B cell (primary cell): ENCODE measurements at regions of chr14 and their contacts with region 1.

Region 1: GRCh38 chr14:93206793-93207467 is at the starts of genes GON7 and UBR7:
- DNase-seq: peak; percentile 92
- ATAC-seq: peak; percentile 96
- H3K4me3 ChIP-seq: peak within 1 kb of the TSS; percentile 2 to 97 (median 94)
- H3K4me3 Mint-ChIP-seq: peak within 1 kb of the TSS; percentile 97
- H3K27ac ChIP-seq: peak within 1 kb of the TSS; percentile 64 to 84
- H3K27ac Mint-ChIP-seq: peak within 1 kb of the TSS; percentile 91
- H3K4me1 ChIP-seq: peaks cover 28 to 42% of the 10 kb centered on the region in 2 donors
- H3K4me1 Mint-ChIP-seq: peaks cover 54% of the 10 kb centered on the region
- H3K27me3 ChIP-seq: no peaks in the 10 kb centered on the region
- H3K27me3 Mint-ChIP-seq: no peaks in the 10 kb centered on the region
- CTCF ChIP-seq: peak; percentile 21
- total RNA-seq, gene GON7: 8.9 and 9.9 TPM in 2 replicates
- total RNA-seq, gene UBR7: 17.3 and 19.1 TPM in 2 replicates

Region 2: DNA sequence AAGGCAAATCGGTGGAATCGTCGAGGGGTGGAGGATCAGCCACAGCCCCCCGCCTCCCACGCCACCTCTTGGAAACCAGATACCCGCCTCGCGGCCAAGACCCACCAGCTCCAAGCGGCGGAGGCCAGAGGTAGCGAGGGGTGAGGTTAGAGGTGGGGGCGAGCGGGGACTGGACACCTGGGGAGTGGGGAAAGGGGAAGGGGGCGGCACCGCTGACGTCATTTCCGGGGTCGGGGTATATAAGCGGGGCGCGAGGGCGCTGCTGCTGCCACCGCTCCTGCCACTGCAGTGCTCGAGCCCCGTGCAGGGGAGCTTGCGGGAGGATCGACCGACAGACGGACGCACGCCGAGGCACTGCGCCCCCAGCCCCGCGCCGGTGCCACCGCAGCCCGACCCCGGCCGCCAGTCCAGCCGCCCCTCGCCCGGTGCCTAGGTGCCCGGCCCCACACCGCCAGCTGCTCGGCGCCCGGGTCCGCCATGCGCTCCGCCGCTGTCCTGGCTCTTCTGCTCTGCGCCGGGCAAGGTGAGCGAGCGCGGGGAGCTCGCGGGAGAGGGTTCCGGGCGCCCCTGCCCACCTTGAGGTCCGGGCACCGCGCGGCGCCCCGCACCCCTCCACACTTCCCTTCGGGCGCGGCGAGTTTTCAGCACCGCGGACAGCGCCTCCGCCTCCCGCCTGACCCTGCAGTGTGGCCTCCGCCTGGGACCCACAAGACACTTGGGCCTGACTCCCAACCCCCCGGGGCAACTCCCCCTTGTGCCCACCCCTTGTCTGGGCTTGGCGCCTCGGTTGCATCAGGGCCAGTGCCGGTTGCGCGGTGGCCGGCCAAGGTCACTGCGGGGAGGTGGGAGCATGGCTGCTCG is 283.8 kb before region 1 on chr14 and contains the start of gene CHGA:
- CTCF ChIA-PET with region 1: no interaction called
- POLR2A ChIA-PET with region 1: no interaction called
- intact Hi-C with region 1: no loop called
- DNase-seq: peak; percentile 54
- ATAC-seq: peak; percentile 31
- H3K4me3 ChIP-seq: no peak within 1 kb of the TSS
- H3K4me3 Mint-ChIP-seq: no peak within 1 kb of the TSS
- H3K27ac ChIP-seq: no peak within 1 kb of the TSS
- H3K27ac Mint-ChIP-seq: no peak within 1 kb of the TSS
- H3K4me1 ChIP-seq: peaks cover 6 to 8% of the 10 kb centered on the region in 2 donors
- H3K4me1 Mint-ChIP-seq: peaks cover 15% of the 10 kb centered on the region
- H3K27me3 ChIP-seq: peaks cover 0 to 21% (median 3%) of the 10 kb centered on the region in 4 experiments
- H3K27me3 Mint-ChIP-seq: peaks cover 46% of the 10 kb centered on the region
- CTCF ChIP-seq: no peak
- total RNA-seq, gene CHGA: not detected in 2 replicates

Region 3: GRCh38 chr14:93137864-93138263 is 69.1 kb before region 1 on chr14:
- CTCF ChIA-PET with region 1: no interaction called
- POLR2A ChIA-PET with region 1: no interaction called
- intact Hi-C with region 1: loop called (anchors 2 kb)
- DNase-seq: no peak
- ATAC-seq: no peak
- H3K4me3 ChIP-seq: no peak overlapping the region
- H3K4me3 Mint-ChIP-seq: no peak overlapping the region
- H3K27ac ChIP-seq: no peak overlapping the region
- H3K27ac Mint-ChIP-seq: no peak overlapping the region
- H3K4me1 ChIP-seq: no peaks in the 10 kb centered on the region
- H3K4me1 Mint-ChIP-seq: peaks cover 2% of the 10 kb centered on the region
- H3K27me3 ChIP-seq: no peaks in the 10 kb centered on the region
- H3K27me3 Mint-ChIP-seq: no peaks in the 10 kb centered on the region
- CTCF ChIP-seq: no peak

Region 4: GRCh38 chr14:93228550-93228949 is 21.6 kb after region 1 on chr14:
- CTCF ChIA-PET with region 1: no interaction called
- POLR2A ChIA-PET with region 1: no interaction called
- intact Hi-C with region 1: no loop called
- DNase-seq: no peak
- ATAC-seq: no peak
- H3K4me3 ChIP-seq: no peak overlapping the region
- H3K4me3 Mint-ChIP-seq: no peak overlapping the region
- H3K27ac ChIP-seq: no peak overlapping the region
- H3K27ac Mint-ChIP-seq: no peak overlapping the region
- H3K4me1 ChIP-seq: peaks cover 4% of the 10 kb centered on the region in 2 donors
- H3K4me1 Mint-ChIP-seq: peaks cover 12% of the 10 kb centered on the region
- H3K27me3 ChIP-seq: peaks cover 0 to 11% (median 0%) of the 10 kb centered on the region in 4 experiments
- H3K27me3 Mint-ChIP-seq: peaks cover 8% of the 10 kb centered on the region
- CTCF ChIP-seq: no peak

Region 5: GRCh38 chr14:93239869-93240677 is 33.1 kb after region 1 on chr14:
- CTCF ChIA-PET with region 1: no interaction called
- POLR2A ChIA-PET with region 1: no interaction called
- intact Hi-C with region 1: no loop called
- DNase-seq: no peak
- ATAC-seq: no peak
- H3K4me3 ChIP-seq: no peak overlapping the region
- H3K4me3 Mint-ChIP-seq: no peak overlapping the region
- H3K27ac ChIP-seq: no peak overlapping the region
- H3K27ac Mint-ChIP-seq: no peak overlapping the region
- H3K4me1 ChIP-seq: no peaks in the 10 kb centered on the region
- H3K4me1 Mint-ChIP-seq: no peaks in the 10 kb centered on the region
- H3K27me3 ChIP-seq: no peaks in the 10 kb centered on the region
- H3K27me3 Mint-ChIP-seq: no peaks in the 10 kb centered on the region
- CTCF ChIP-seq: no peak

Region 6: GRCh38 chr14:93332853-93333630 is 126.1 kb after region 1 on chr14 and contains the start of gene BTBD7:
- CTCF ChIA-PET with region 1: no interaction called
- POLR2A ChIA-PET with region 1: no interaction called
- intact Hi-C with region 1: loop called (anchors 1 kb)
- DNase-seq: peak; percentile 96
- ATAC-seq: peak; percentile 90
- H3K4me3 ChIP-seq: peak within 1 kb of the TSS; percentile 66 to 95 (median 82)
- H3K4me3 Mint-ChIP-seq: peak within 1 kb of the TSS; percentile 92
- H3K27ac ChIP-seq: peak within 1 kb of the TSS; percentile 59 to 92
- H3K27ac Mint-ChIP-seq: peak within 1 kb of the TSS; percentile 95
- H3K4me1 ChIP-seq: peaks cover 19 to 31% of the 10 kb centered on the region in 2 donors
- H3K4me1 Mint-ChIP-seq: peaks cover 49% of the 10 kb centered on the region
- H3K27me3 ChIP-seq: no peaks in the 10 kb centered on the region
- H3K27me3 Mint-ChIP-seq: no peaks in the 10 kb centered on the region
- CTCF ChIP-seq: no peak
- total RNA-seq, gene BTBD7: 48.6 and 49.0 TPM in 2 replicates

Region 7: GRCh38 chr14:93619176-93619793 is 412.4 kb after region 1 on chr14:
- CTCF ChIA-PET with region 1: interaction called, 7 read pairs
- POLR2A ChIA-PET with region 1: no interaction called
- intact Hi-C with region 1: loop called (anchors 1 kb)
- DNase-seq: peak; percentile 49
- ATAC-seq: no peak
- H3K4me3 ChIP-seq: no peak overlapping the region
- H3K4me3 Mint-ChIP-seq: no peak overlapping the region
- H3K27ac ChIP-seq: no peak overlapping the region
- H3K27ac Mint-ChIP-seq: no peak overlapping the region
- H3K4me1 ChIP-seq: no peaks in the 10 kb centered on the region
- H3K4me1 Mint-ChIP-seq: no peaks in the 10 kb centered on the region
- H3K27me3 ChIP-seq: peaks cover 0 to 3% (median 0%) of the 10 kb centered on the region in 4 experiments
- H3K27me3 Mint-ChIP-seq: peaks cover 19% of the 10 kb centered on the region
- CTCF ChIP-seq: peak; percentile 73

Region 8: GRCh38 chr14:93752635-93753561 is 546.0 kb after region 1 on chr14:
- CTCF ChIA-PET with region 1: no interaction called
- POLR2A ChIA-PET with region 1: no interaction called
- intact Hi-C with region 1: no loop called
- DNase-seq: no peak
- ATAC-seq: no peak
- H3K4me3 ChIP-seq: no peak overlapping the region
- H3K4me3 Mint-ChIP-seq: no peak overlapping the region
- H3K27ac ChIP-seq: no peak overlapping the region
- H3K27ac Mint-ChIP-seq: no peak overlapping the region
- H3K4me1 ChIP-seq: no peaks in the 10 kb centered on the region
- H3K4me1 Mint-ChIP-seq: no peaks in the 10 kb centered on the region
- H3K27me3 ChIP-seq: no peaks in the 10 kb centered on the region
- H3K27me3 Mint-ChIP-seq: no peaks in the 10 kb centered on the region
- CTCF ChIP-seq: no peak

Region 9: DNA sequence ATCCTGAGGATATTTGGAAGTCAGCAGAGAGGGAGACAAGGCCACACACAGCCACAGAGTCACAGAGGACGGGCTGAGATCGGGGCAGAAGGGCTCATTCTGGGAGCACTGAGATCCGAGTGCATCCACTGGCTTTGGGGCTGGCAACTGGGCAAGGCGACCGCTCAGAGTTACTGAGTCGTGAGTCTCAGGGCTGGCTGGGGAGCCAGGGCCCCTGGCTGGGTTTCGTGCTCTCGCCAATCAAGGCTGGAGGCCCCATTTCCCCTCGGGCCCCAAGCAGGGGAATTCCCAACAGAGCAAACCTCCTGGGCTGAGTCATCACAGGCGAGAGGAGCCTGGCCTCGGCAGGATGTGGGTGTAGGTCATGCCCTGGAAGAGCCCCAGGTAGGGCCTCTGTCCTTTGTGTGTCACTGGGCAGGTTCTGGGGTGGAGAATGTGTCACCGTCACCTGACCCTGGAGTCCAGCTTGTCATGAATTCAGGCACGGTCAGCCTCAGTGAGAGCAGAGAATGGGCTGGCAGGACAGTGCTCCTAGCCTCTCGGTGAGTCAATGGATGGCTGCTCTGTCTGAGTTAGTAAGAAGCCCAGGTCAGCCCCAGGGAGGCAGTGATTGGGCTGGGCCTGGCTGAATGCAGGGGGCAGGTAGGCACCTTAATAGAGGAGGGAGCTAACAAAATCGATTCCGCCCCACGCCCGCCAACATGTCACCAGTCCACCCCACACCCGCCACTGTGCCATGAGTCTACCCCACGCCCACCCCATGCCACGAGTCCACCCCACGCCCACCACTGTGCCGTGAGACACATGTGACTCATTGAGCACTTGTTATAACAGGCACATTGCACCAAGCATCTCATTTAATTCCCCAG is 752.5 kb after region 1 on chr14:
- CTCF ChIA-PET with region 1: no interaction called
- POLR2A ChIA-PET with region 1: no interaction called
- intact Hi-C with region 1: loop called (anchors 10 kb)
- DNase-seq: peak; percentile 92
- ATAC-seq: peak; percentile 71
- H3K4me3 ChIP-seq: peak overlapping the region in 1 of 5 experiments; percentile 19
- H3K4me3 Mint-ChIP-seq: peak overlapping the region; percentile 78
- H3K27ac ChIP-seq: peak overlapping the region; percentile 68 to 75
- H3K27ac Mint-ChIP-seq: peak overlapping the region; percentile 95
- H3K4me1 ChIP-seq: peaks cover 96 to 97% of the 10 kb centered on the region in 2 donors
- H3K4me1 Mint-ChIP-seq: peaks cover 92% of the 10 kb centered on the region
- H3K27me3 ChIP-seq: no peaks in the 10 kb centered on the region
- H3K27me3 Mint-ChIP-seq: no peaks in the 10 kb centered on the region
- CTCF ChIP-seq: no peak